MCF 10A (cell line): ENCODE measurements at regions of chr10 and their contacts with region 1.

Region 1: DNA sequence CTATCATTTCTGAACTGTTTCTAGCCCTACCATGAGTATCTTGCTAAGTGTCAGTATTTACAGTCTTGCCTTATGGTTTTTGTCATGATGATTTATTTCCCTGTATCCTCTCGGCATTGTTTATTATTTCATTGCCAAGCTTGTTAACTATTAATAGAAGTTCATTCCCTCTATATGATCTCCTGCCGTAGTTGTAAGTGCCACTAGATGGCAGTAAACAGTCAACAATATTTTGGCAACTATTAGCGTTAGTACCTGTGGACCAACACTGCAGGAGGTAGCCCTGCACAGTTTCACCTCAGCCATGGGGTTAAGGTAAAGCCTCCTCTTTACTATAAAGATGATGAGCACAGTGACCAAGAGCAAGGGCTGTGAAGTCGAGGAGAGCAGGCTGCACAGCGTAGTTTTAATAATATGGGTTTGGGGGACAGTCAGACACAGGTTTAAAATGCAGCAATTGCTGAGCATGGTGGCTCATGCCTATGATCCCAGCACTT is 26.1 kb upstream of the CCNJ start:
- DNase-seq: peak; percentile 75
- H3K4me3 Mint-ChIP-seq: no peak overlapping the region
- H3K27ac Mint-ChIP-seq: no peak overlapping the region
- H3K4me1 Mint-ChIP-seq: peaks cover 5% of the 10 kb centered on the region
- H3K27me3 Mint-ChIP-seq: peaks cover 10% of the 10 kb centered on the region
- CTCF ChIP-seq: peak; percentile 32

Region 2: GRCh38 chr10:95782318-95782717 is 234.9 kb before region 1 on chr10:
- CTCF ChIA-PET with region 1: no interaction called
- POLR2A ChIA-PET with region 1: no interaction called
- intact Hi-C with region 1: no loop called
- DNase-seq: no peak
- H3K4me3 Mint-ChIP-seq: no peak overlapping the region
- H3K27ac Mint-ChIP-seq: no peak overlapping the region
- H3K4me1 Mint-ChIP-seq: no peaks in the 10 kb centered on the region
- H3K27me3 Mint-ChIP-seq: peaks cover 16% of the 10 kb centered on the region
- CTCF ChIP-seq: no peak

Region 3: DNA sequence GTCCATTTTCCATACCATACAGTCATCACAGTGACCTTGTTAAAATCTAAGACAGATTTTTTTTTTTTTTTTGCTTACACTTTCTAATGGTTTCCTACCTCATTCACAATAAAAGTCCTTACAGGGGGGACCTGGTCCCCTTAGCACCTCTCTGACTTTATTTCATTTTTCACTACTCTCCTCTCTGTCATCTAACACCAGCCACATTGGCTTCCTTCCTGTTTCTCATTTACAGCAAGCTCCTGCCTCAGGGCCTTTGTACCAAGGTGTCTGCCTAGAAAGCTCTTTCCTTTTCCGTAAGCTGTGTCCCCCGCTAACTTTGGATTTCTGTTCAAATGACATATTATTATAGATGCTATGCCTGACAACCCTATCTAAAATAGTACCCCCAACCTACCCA is 81.8 kb before region 1 on chr10:
- CTCF ChIA-PET with region 1: no interaction called
- POLR2A ChIA-PET with region 1: no interaction called
- intact Hi-C with region 1: no loop called
- DNase-seq: no peak
- H3K4me3 Mint-ChIP-seq: no peak overlapping the region
- H3K27ac Mint-ChIP-seq: no peak overlapping the region
- H3K4me1 Mint-ChIP-seq: no peaks in the 10 kb centered on the region
- H3K27me3 Mint-ChIP-seq: peaks cover 23% of the 10 kb centered on the region
- CTCF ChIP-seq: no peak

Region 4: GRCh38 chr10:96129387-96130325 is 112.4 kb after region 1 on chr10 and contains the start of gene ZNF518A:
- CTCF ChIA-PET with region 1: interaction called, 5 read pairs
- POLR2A ChIA-PET with region 1: interaction called, 3 read pairs
- intact Hi-C with region 1: loop called (anchors 10 kb)
- DNase-seq: peak; percentile 90
- H3K4me3 Mint-ChIP-seq: peak within 1 kb of the TSS; percentile 84
- H3K27ac Mint-ChIP-seq: peak within 1 kb of the TSS; percentile 99
- H3K4me1 Mint-ChIP-seq: peaks cover 10% of the 10 kb centered on the region
- H3K27me3 Mint-ChIP-seq: no peaks in the 10 kb centered on the region
- CTCF ChIP-seq: no peak
- total RNA-seq, gene ZNF518A: 13.3 and 14.7 TPM in 2 replicates

Region 5: GRCh38 chr10:96292971-96293920 is 276.0 kb after region 1 on chr10:
- CTCF ChIA-PET with region 1: interaction called, 170 read pairs
- POLR2A ChIA-PET with region 1: no interaction called
- intact Hi-C with region 1: loop called (anchors 1 kb)
- DNase-seq: peak; percentile 61
- H3K4me3 Mint-ChIP-seq: no peak overlapping the region
- H3K27ac Mint-ChIP-seq: no peak overlapping the region
- H3K4me1 Mint-ChIP-seq: no peaks in the 10 kb centered on the region
- H3K27me3 Mint-ChIP-seq: peaks cover 8% of the 10 kb centered on the region
- CTCF ChIP-seq: peak; percentile 43

Region 6: GRCh38 chr10:96334616-96335526 is 317.6 kb after region 1 on chr10:
- CTCF ChIA-PET with region 1: interaction called, 43 read pairs
- POLR2A ChIA-PET with region 1: no interaction called
- intact Hi-C with region 1: loop called (anchors 5 kb)
- DNase-seq: peak; percentile 53
- H3K4me3 Mint-ChIP-seq: no peak overlapping the region
- H3K27ac Mint-ChIP-seq: no peak overlapping the region
- H3K4me1 Mint-ChIP-seq: no peaks in the 10 kb centered on the region
- H3K27me3 Mint-ChIP-seq: peaks cover 59% of the 10 kb centered on the region
- CTCF ChIP-seq: peak; percentile 53